ENCODE measurements at regions of chr11 and their contacts with region 1.

Region 1: GRCh38 chr11:97060184-97060583 is 670.4 kb downstream of the JRKL start:
- DNase-seq: no peak

Region 2: DNA sequence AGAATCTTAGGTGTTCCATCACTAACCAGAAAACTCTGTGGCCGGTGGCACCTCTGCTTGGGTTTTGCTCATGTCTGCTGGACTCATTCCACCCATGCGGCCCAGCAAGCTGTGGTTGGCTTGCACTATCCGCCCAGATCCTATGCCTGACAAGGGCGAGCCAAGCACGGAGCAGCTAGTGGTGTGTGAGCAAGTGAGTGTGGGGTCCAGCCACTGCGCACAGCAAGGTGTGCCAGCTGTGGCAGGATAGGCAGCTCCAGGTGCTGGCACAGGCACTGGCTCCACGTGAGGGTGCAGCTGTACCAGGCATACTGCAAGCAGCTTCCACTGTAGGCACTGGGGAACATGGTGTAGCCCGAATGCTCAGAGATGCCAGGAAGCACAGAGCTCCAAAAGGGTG is 1146.9 kb after region 1 on chr11:
- intact Hi-C with region 1: loop called in 1 of 2 experiments (anchors 5 kb)
- DNase-seq: peak; percentile 73

Measured in posterior vena cava (tissue), 2 donors.